Esophagus muscularis mucosa (tissue), 4 donors: ENCODE measurements at regions of chr19 and their contacts with region 1.

Region 1: DNA sequence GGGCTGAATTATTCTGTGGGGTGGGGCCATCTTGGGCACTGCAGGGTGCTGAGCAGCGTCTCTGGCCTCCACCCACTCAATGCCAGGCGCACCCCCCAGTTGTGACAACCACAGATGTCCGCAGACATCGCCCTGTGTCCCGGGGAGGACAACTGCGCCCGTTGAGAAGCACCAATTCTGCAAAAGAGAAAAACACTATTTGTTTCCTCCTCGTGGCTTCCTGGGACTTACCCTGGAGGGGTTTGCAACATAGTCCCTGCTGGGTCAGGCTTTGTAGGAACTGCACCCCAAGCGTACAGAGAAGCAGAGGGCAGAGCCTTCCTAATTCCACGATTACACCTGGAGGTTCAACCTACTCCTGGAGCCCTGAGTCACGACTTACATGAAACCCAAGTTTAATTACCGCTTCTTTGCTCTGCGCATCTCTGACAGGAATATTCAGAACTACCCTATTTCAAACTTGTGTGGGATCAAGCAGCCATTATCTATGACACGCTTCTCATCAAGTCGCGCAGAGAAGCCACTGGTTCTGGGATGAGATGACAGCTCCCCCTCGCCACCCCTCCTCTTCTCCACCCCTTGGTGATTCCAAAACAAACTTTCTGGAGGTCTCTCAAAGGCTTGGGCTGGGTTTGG is 11.1 kb upstream of the SLC39A3 start:
- DNase-seq: no peak
- H3K4me3 ChIP-seq: no peak overlapping the region
- H3K27ac ChIP-seq: no peak overlapping the region
- H3K4me1 ChIP-seq: peaks cover 0 to 8% (median 5%) of the 10 kb centered on the region in 4 donors
- H3K27me3 ChIP-seq: no peaks in the 10 kb centered on the region
- CTCF ChIP-seq: no peak
- EP300 ChIP-seq: no peak
- POLR2A ChIP-seq: no peak

Region 2: DNA sequence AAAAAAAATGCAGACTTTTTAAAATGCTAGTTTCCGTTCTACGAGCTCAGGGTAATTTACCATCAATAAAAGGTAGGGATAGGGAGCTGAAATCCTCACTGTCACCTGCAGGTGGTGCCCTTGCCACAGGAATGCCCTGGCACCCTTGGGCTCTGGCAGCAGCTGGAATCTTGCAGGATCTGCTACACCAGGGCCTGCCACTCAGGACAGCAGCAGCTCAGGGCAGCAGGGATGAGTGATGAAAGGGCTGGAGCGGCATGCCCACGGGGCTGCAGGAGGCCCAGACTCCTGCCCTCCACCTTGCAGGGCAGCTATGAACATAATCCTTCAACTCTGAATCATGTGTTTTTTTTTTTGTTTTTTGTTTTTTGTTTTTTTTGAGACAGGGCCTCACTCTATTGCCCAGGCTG is 102.4 kb before region 1 on chr19:
- intact Hi-C with region 1: loop called (anchors 1 kb)
- DNase-seq: no peak
- H3K4me3 ChIP-seq: no peak overlapping the region
- H3K27ac ChIP-seq: no peak overlapping the region
- H3K4me1 ChIP-seq: peaks cover 0 to 4% (median under 1%) of the 10 kb centered on the region in 4 donors
- H3K27me3 ChIP-seq: no peaks in the 10 kb centered on the region
- CTCF ChIP-seq: peak; percentile 83 to 96 (median 83)
- EP300 ChIP-seq: no peak
- POLR2A ChIP-seq: no peak